ENCODE measurements at regions of chr12 and their contacts with region 1.

Region 1: DNA sequence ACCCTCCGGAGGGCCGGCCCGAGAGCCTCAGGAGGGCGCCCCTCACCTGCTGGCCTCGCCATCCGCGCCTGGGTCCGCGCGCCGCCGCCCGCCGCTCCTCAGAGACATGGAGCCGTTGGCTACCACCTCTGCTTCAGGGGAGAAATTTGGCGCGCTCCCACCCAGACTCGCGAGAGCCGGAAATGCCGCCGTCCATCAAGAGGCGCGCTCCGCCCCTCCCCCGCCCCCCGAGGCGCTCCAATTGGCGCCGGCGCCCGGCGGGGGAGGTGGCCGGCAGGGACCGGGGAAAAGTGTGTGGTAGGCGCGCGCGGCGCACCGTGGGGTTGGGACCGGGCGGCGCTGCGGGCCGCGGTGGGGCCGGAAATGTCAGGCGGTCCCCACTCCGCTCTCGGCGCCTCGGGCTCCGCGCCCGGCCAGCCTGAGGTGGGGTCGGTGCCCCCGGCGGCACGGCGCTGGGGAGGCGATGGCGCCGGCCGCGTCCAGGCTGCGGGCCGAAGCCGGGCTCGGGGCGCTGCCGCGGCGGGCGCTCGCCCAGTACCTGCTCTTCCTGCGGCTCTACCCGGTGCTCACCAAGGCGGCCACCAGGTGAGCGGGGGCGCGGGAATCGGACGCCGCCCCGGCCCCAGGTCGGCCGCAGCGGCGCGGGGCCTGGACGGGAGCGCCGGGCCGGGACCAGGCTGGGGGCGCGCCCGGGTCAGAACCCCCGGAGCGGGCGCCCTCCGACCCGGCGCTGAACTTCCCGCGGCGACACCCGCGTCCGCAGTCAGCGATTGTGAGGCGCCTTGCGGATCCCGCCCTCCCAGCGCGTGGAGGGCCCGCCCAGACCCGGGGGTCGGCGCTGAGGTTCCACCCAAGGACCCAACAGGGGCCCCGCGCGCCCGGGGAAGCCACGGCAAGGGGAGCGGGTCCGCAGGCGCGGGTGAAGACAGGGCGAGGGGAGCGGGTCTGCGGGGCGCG is at the starts of genes POLE and PXMP2:
- DNase-seq: peak; percentile 91
- ATAC-seq: peak; percentile 95
- H3K4me3 Mint-ChIP-seq: peak within 1 kb of the TSS; percentile 83
- H3K27ac Mint-ChIP-seq: no peak within 1 kb of the TSS
- H3K4me1 Mint-ChIP-seq: peaks cover 16% of the 10 kb centered on the region
- H3K27me3 Mint-ChIP-seq: no peaks in the 10 kb centered on the region
- CTCF ChIP-seq: no peak
- total RNA-seq, gene POLE: 51.1 and 64.3 TPM in 2 replicates
- total RNA-seq, gene PXMP2: 5.3 and 7.7 TPM in 2 replicates

Region 2: DNA sequence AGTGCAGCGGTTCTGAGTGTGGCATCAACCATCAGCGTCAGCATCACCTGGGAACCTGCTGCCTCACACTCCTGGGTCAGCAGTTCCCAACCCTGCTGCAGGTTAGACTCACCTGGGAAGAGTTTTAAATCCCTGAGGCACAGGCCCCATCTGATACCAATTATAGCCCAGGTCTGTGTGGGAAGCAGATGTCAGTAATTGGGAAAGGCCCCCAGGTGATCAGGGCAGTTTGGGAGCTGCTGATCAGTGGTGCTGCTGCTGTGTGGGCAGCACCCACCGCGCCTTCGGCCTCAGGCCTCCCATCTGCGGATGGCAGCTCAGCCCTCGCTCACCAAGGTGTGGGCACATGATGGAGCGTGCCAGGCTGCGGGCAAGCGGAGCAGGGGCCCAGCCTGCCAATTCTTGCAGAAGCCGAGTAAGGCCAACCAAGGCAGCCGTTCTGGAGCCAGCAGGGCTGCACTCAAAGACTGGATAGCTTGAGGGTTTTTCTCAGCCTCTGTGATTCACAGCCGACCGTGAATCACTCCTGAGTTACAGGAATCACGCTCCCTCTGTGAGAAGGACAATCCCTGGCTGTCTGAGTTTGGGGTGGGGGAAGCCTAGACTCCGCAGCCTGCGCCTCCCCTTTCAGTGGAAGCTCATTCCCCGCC is 1132.2 kb before region 1 on chr12:
- CTCF ChIA-PET with region 1: no interaction called
- POLR2A ChIA-PET with region 1: no interaction called
- intact Hi-C with region 1: no loop called
- DNase-seq: no peak
- ATAC-seq: no peak
- H3K4me3 Mint-ChIP-seq: no peak overlapping the region
- H3K27ac Mint-ChIP-seq: no peak overlapping the region
- H3K4me1 Mint-ChIP-seq: no peaks in the 10 kb centered on the region
- H3K27me3 Mint-ChIP-seq: peaks cover 5% of the 10 kb centered on the region
- CTCF ChIP-seq: no peak

Region 3: DNA sequence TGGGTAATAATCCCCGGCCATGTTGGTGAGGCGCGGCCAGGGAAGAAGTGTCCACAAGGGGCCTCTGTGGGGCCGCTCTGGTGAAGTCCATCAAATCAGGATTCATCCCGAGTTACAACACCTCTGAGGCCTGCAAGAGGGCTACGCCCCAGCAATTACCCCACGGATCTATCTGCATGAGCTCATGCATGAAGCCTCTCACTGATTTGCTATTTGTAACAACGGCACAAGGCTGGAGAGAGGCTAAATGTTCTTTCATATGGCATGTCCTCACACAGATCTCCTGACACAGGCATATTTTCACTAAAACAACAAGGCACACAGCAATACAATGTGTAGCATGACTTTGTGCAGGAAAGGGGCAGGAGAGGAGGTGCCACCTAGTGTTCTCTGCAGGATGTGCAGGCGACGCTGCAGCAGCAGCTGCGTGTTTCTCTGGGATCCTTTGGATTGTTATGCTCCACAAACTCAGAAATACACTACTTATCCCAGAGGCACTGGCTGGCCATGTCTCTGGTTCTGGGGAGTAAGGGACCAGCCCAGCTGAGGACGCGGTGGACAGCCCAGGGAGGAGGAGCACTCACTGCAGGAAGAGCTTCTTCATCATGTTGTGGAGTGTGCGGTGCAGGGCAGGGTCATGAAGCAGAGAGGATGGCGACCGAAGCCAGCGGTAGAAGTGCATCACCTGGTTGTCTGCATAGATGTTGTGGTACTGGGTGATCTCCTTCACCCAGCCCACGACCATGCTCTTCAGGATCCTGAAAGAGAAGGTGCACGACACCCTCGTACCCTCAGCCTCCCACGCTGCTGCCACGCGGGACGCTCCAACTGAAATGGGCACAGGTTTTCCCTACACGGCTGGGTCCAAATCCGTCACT is 48.7 kb before region 1 on chr12:
- CTCF ChIA-PET with region 1: no interaction called
- POLR2A ChIA-PET with region 1: no interaction called
- intact Hi-C with region 1: no loop called
- DNase-seq: no peak
- ATAC-seq: no peak
- H3K4me3 Mint-ChIP-seq: no peak overlapping the region
- H3K27ac Mint-ChIP-seq: no peak overlapping the region
- H3K4me1 Mint-ChIP-seq: peaks cover 9% of the 10 kb centered on the region
- H3K27me3 Mint-ChIP-seq: no peaks in the 10 kb centered on the region
- CTCF ChIP-seq: no peak

Region 4: DNA sequence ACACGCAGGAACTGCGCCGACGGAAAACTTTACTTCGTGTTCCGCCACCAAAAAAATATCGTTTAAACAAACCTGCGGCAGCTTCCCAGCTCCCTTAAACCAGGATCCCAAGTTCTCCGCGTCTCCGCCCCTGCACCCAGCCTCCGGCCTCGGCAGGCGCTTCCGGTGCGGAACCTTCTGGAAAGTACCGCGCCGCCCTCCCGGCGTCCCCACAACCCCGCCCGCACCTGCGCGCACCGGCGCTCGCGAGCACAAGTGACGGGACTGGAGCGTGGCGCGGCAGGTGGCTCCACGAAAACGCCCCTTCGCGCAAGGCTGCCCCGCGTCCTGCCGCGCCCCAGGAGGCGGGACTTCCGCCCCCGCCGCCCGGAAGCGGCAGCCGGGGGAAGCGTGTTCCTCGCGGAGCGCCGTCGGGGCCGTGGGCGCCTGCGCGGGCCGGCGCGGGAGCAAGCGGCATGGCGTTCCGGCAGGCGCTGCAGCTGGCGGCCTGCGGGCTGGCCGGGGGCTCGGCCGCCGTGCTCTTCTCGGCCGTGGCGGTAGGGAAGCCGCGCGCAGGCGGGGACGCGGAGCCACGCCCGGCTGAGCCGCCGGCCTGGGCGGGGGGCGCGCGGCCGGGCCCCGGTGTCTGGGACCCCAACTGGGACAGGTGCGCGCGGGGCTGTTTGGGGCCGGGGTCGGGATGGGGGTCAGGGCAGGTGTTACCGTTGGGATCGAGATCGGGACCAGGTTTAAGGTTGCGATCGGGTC is 23.1 kb after region 1 on chr12 and contains the start of gene PGAM5:
- CTCF ChIA-PET with region 1: no interaction called
- POLR2A ChIA-PET with region 1: no interaction called
- intact Hi-C with region 1: loop called (anchors 1 kb)
- DNase-seq: peak; percentile 96
- ATAC-seq: peak; percentile 93
- H3K4me3 Mint-ChIP-seq: peak within 1 kb of the TSS; percentile 92
- H3K27ac Mint-ChIP-seq: peak within 1 kb of the TSS; percentile 95
- H3K4me1 Mint-ChIP-seq: peaks cover 33% of the 10 kb centered on the region
- H3K27me3 Mint-ChIP-seq: no peaks in the 10 kb centered on the region
- CTCF ChIP-seq: no peak
- total RNA-seq, gene PGAM5: 44.0 and 48.7 TPM in 2 replicates

Region 5: GRCh38 chr12:132771126-132771838 is 83.8 kb after region 1 on chr12:
- CTCF ChIA-PET with region 1: no interaction called
- POLR2A ChIA-PET with region 1: interaction called, 3 read pairs
- intact Hi-C with region 1: loop called (anchors 1 kb)
- DNase-seq: peak; percentile 38
- ATAC-seq: peak; percentile 49
- H3K4me3 Mint-ChIP-seq: peak overlapping the region; percentile 62
- H3K27ac Mint-ChIP-seq: peak overlapping the region; percentile 94
- H3K4me1 Mint-ChIP-seq: peaks cover 68% of the 10 kb centered on the region
- H3K27me3 Mint-ChIP-seq: no peaks in the 10 kb centered on the region
- CTCF ChIP-seq: no peak

Region 6: DNA sequence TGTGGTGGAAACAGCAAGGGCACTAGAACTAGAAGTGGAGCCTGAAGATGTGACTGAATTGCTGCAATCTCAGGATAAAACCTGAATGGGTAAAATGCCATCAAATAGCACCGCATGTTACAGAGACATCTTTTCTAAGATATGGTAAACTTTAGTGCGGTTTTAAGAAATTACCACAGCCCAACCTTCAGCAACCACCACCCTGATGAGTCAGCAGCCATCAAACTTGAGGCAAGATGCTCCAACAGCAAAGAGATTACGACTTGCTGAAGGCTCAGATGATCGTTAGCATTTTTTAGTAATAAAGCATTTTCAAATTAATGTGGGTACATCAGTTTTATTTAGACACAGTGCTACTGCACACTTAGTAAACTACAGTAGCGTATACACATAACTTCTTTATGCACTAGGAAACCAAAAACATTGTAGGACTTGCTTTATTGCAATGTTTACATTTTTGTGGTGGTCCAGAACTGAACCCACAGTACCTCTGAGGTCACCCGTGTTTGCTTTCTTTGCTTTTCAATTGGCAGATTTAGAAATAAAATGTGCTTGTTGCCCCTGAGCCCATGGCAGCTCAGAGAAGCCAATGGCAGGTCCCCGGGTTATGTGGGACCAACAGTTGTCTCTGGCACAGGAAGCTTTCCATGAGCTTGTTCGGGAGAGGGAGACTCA is 125.3 kb after region 1 on chr12:
- CTCF ChIA-PET with region 1: no interaction called
- POLR2A ChIA-PET with region 1: no interaction called
- intact Hi-C with region 1: loop called (anchors 1 kb)
- DNase-seq: no peak
- ATAC-seq: no peak
- H3K4me3 Mint-ChIP-seq: no peak overlapping the region
- H3K27ac Mint-ChIP-seq: peak overlapping the region; percentile 56
- H3K4me1 Mint-ChIP-seq: peaks cover 6% of the 10 kb centered on the region
- H3K27me3 Mint-ChIP-seq: no peaks in the 10 kb centered on the region
- CTCF ChIP-seq: no peak

Region 7: GRCh38 chr12:132908145-132909044 is 220.9 kb after region 1 on chr12:
- CTCF ChIA-PET with region 1: no interaction called
- POLR2A ChIA-PET with region 1: no interaction called
- intact Hi-C with region 1: loop called (anchors 1 kb)
- DNase-seq: peak; percentile 91
- ATAC-seq: peak; percentile 90
- H3K4me3 Mint-ChIP-seq: peak overlapping the region; percentile 94
- H3K27ac Mint-ChIP-seq: peak overlapping the region; percentile 96
- H3K4me1 Mint-ChIP-seq: peaks cover 13% of the 10 kb centered on the region
- H3K27me3 Mint-ChIP-seq: peaks cover 2% of the 10 kb centered on the region
- CTCF ChIP-seq: no peak

Measured in activated B cell treated with CpG ODN at 0.5 μM for 24 hours (primary cell).